Left lung (tissue), 14 donors: ENCODE measurements at regions of chr5 and their contacts with region 1.

Region 1: DNA sequence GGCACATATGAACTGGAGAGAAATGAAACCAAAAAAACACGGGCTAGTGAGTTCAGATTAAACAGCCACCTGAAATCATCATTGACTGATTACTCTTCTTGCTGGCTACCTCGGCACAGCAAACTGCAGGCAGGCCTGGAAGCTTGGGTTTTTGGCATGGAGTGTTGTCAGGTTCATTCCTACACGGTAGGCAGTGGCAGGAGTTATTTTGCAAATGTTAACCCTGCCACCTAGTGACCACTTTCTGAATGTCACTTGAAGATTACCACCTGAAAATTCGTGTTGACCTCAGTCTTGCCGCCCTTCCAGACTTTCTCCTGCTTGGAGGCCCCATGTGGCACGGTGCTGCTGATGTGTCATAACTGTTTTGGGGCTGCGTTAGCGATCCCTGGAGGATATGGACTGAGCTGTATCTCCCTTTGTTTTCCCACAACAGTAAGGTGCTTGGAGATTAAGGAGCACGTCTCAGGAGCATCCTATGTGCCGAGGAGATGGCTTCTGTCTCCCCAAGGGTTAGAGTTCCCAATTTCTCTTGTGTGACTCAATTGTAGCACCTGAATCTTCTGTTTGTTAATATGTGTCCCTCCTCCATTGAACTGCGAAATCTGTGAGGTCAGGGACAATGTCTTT is 12.7 kb upstream of the CD180 start:
- DNase-seq: peak in 2 of 4 donors; percentile 70 to 77
- ATAC-seq: peak; percentile 85
- H3K4me3 ChIP-seq: no peak overlapping the region
- H3K27ac ChIP-seq: no peak overlapping the region
- H3K4me1 ChIP-seq: peaks cover 0 to 49% of the 10 kb centered on the region in 2 donors
- H3K27me3 ChIP-seq: no peaks in the 10 kb centered on the region
- CTCF ChIP-seq: peak; percentile 66 to 78

Region 2: GRCh38 chr5:66814146-66814991 is 394.9 kb before region 1 on chr5:
- intact Hi-C with region 1: loop called in 1 of 2 experiments (anchors 5 kb)
- DNase-seq: no peak
- ATAC-seq: peak; percentile 65
- H3K4me3 ChIP-seq: no peak overlapping the region
- H3K27ac ChIP-seq: no peak overlapping the region
- H3K4me1 ChIP-seq: no peaks in the 10 kb centered on the region
- H3K27me3 ChIP-seq: no peaks in the 10 kb centered on the region
- CTCF ChIP-seq: peak; percentile 55 to 77

Region 3: GRCh38 chr5:67142816-67143215 is 66.4 kb before region 1 on chr5:
- intact Hi-C with region 1: no loop called
- DNase-seq: no peak
- ATAC-seq: no peak
- H3K4me3 ChIP-seq: no peak overlapping the region
- H3K27ac ChIP-seq: no peak overlapping the region
- H3K4me1 ChIP-seq: peaks cover 0 to 5% of the 10 kb centered on the region in 2 donors
- H3K27me3 ChIP-seq: no peaks in the 10 kb centered on the region
- CTCF ChIP-seq: no peak

Region 4: DNA sequence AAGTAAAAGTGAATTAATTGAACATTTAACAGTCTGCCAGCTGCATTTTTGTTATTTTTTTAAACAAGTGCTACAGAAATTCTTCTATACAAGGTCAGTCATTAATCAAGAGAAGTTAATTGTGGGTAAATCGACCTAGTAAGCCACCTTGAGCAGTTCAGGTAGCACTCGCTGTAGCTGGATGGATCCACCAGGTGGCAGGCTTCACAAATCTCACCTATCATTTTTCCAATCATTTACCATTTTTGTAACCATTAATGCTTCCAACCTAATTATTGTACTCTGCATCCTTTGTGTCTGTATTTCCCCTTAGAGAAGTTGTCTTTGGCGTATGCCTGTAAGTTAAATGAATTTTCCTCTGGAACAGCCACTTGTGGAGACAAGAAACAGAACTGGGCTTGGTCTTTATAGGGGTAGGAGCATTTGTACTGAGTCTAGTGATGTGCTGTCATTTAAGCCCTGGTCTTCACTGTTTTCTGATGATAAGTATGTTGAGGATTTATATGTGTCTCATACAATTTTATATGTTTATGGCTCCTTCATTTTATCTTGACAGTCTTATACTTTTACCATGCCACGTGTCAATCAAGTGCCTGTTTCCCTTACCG is 52.2 kb before region 1 on chr5:
- intact Hi-C with region 1: loop called in 1 of 2 experiments (anchors 5 kb)
- DNase-seq: no peak
- ATAC-seq: peak; percentile 40
- H3K4me3 ChIP-seq: no peak overlapping the region
- H3K27ac ChIP-seq: no peak overlapping the region
- H3K4me1 ChIP-seq: peaks cover 0 to 5% of the 10 kb centered on the region in 2 donors
- H3K27me3 ChIP-seq: no peaks in the 10 kb centered on the region
- CTCF ChIP-seq: peak; percentile 73 to 78

Region 5: GRCh38 chr5:67350618-67351201 is 141.5 kb after region 1 on chr5:
- intact Hi-C with region 1: no loop called
- DNase-seq: peak in 2 of 4 donors; percentile 40 to 59
- ATAC-seq: peak; percentile 35
- H3K4me3 ChIP-seq: no peak overlapping the region
- H3K27ac ChIP-seq: no peak overlapping the region
- H3K4me1 ChIP-seq: peaks cover 3 to 14% of the 10 kb centered on the region in 2 donors
- H3K27me3 ChIP-seq: no peaks in the 10 kb centered on the region
- CTCF ChIP-seq: no peak

Region 6: DNA sequence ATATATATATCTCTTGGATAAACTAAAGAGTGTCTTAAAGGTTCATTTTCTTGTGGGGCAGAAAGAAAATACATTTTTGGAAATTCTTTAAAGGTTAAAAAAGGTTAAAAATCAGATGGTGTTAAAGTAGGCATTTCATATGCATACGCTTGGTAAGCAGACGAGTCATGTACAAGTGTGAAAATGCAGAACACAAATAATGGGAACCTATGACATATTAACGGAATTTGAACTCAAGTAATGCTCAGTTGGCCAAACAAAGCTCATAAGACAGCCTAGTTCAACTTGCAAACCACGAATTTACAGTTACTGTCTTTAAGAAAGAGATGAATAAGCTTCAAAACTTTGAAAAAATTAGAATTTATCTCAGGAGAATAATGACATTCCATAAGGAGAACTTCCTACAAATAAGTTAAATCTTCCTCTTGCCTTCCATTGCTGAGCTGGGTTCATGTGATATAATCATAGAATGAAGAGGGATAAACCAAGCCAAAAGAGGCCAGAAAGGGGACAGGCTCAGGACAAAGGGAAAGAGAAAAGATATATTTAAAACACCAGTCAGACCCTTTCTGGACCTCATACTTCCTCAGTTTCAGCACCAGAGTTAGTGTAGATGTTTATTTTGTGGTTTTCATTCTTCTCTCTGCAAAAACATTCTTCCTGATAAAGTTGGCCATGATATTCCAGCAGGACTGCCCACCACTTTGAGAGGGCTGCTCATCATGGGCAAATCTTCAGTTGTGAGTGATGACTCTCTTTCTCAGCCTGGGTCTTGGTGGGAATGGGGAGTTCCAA is 244.1 kb after region 1 on chr5:
- intact Hi-C with region 1: no loop called
- DNase-seq: no peak
- ATAC-seq: no peak
- H3K4me3 ChIP-seq: no peak overlapping the region
- H3K27ac ChIP-seq: no peak overlapping the region
- H3K4me1 ChIP-seq: no peaks in the 10 kb centered on the region
- H3K27me3 ChIP-seq: no peaks in the 10 kb centered on the region
- CTCF ChIP-seq: no peak